ENCODE measurements at regions of chr9 and their contacts with region 1.

Region 1: GRCh38 chr9:35096035-35096849 is at the start of gene PIGO:
- DNase-seq: peak; percentile 74 to 96
- H3K4me3 ChIP-seq: peak within 1 kb of the TSS; percentile 69 to 98 (median 86)
- H3K27ac ChIP-seq: peak within 1 kb of the TSS; percentile 96
- H3K4me1 ChIP-seq: peaks cover 0 to 2% (median under 1%) of the 10 kb centered on the region in 4 experiments; a peak in 3 of 7 replicates
- H3K27me3 ChIP-seq: no peaks in the 10 kb centered on the region
- CTCF ChIP-seq: peak; percentile 88 to 96 (median 93)
- EP300 ChIP-seq: no peak
- POLR2A ChIP-seq: peak; percentile 94 to 98
- RAD21 ChIP-seq: peak; percentile 55 to 72
- total RNA-seq, gene PIGO: 20.3 and 20.5 TPM in 2 replicates

Region 2: DNA sequence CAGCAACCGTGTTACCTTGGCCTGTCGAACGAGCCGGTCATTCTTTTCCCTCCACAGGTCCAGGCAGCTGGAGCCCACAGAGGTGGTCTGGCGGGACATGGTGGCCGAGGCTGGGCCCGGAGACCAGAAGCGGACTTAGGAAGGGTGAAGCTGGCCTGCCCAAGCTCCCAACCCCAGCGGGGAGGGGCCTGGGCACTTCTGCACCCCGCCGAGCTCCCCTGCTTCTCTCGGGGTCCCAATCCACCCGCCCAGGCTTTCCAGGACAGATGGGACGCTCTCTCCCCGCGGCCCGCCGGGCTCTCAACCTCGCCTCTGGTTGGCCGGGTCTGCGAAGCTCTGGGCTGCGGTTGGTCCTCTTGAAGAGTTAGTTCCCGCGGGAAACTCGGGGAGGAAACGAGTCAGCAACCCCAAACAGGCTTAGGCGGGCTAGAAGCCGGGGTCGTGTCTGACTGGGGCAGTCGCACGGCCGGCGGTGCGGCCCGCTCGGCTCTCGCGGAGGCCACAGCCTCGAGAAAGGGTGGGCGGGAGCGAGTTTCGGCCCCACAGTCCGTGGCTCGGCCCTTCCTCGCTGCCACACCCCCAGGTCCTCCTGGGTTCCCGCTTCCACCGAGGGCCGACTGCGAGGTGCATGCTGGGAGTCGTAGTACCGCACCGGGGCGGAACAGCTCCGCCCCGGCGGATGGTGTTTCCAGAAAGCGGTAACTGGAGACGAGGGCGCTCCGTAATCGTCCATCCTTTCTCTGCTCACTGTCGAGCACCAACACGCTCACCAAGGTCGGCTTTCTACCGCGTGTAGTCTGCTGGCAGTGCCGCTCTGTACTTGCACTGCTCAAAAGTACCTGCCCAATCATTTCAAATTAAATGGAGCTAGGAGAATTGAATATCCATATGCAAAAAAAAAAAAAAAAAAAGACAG is 16.6 kb before region 1 on chr9 and contains the start of gene FANCG:
- CTCF ChIA-PET with region 1: interaction called, 46 read pairs
- POLR2A ChIA-PET with region 1: interaction called, 440 read pairs
- DNase-seq: peak; percentile 72 to 90
- H3K4me3 ChIP-seq: peak within 1 kb of the TSS; percentile 72 to 92 (median 87)
- H3K27ac ChIP-seq: peak within 1 kb of the TSS; percentile 93
- H3K4me1 ChIP-seq: peaks cover 0 to 13% (median 4%) of the 10 kb centered on the region in 4 experiments; a peak in 4 of 7 replicates
- H3K27me3 ChIP-seq: no peaks in the 10 kb centered on the region
- CTCF ChIP-seq: no peak
- EP300 ChIP-seq: no peak
- POLR2A ChIP-seq: peak; percentile 64 to 92
- RAD21 ChIP-seq: no peak
- total RNA-seq, gene FANCG: 86.7 and 87.1 TPM in 2 replicates

Region 3: GRCh38 chr9:35111001-35111933 is 15.0 kb after region 1 on chr9:
- CTCF ChIA-PET with region 1: interaction called, 9 read pairs
- POLR2A ChIA-PET with region 1: interaction called, 151 read pairs
- DNase-seq: peak; percentile 89 to 98
- H3K4me3 ChIP-seq: peak overlapping the region; percentile 53 to 87 (median 79)
- H3K27ac ChIP-seq: no peak overlapping the region
- H3K4me1 ChIP-seq: peaks cover 4 to 21% (median 10%) of the 10 kb centered on the region in 4 experiments; a peak in 6 of 7 replicates
- H3K27me3 ChIP-seq: no peaks in the 10 kb centered on the region
- CTCF ChIP-seq: no peak
- EP300 ChIP-seq: no peak
- POLR2A ChIP-seq: 0 out of 3 replicates have a peak, but pooled peaks of 1 of the 2 experiments have one; percentile 21
- RAD21 ChIP-seq: no peak